ENCODE measurements at regions of chr13 and their contacts with region 1.

Region 1: GRCh38 chr13:36981156-36981743 is 17.9 kb downstream of the ALG5 start:
- DNase-seq: no peak
- ATAC-seq: no peak
- H3K4me3 ChIP-seq: no peak overlapping the region
- H3K27ac ChIP-seq: no peak overlapping the region
- H3K4me1 ChIP-seq: no peaks in the 10 kb centered on the region
- H3K27me3 ChIP-seq: no peaks in the 10 kb centered on the region
- CTCF ChIP-seq: peak in 4 of 5 experiments; percentile 30 to 45 (median 34)
- POLR2A ChIP-seq: no peak

Region 2: GRCh38 chr13:36706755-36707154 is 274.5 kb before region 1 on chr13:
- in situ Hi-C with region 1: no loop called
- intact Hi-C with region 1: no loop called
- DNase-seq: no peak
- ATAC-seq: no peak
- H3K4me3 ChIP-seq: no peak overlapping the region
- H3K27ac ChIP-seq: no peak overlapping the region
- H3K4me1 ChIP-seq: no peaks in the 10 kb centered on the region
- H3K27me3 ChIP-seq: no peaks in the 10 kb centered on the region
- CTCF ChIP-seq: no peak
- POLR2A ChIP-seq: no peak

Region 3: DNA sequence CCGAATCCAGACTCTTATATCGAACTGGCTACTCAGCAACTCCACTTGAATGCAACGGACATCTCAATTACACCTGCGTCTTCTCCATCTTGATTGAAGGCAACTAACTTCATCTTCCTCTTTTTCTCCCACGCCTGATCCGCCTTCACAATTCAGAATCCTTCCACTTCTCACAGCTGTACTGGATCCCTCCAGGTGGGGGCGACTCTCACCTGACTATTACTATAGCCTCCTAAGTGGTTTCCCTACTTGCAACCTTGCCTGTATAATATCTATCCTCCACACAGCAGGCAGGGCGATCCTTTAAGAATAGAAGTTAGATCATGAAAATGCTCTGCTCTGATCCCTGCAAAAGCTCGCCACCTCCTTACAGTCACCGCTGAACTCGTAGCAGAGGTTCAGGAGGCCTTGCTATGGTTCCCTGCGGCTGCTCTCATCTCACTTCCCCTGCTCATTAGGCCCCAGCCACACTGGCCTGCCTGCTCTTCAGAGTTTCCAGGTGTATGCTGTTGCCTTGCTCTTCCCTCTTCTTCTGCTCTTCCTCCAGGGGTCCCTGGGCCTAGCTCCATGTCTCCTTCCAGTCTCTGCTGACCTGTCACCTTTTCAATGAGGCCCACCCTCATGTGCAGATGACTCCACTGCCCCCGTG is 130.3 kb before region 1 on chr13:
- in situ Hi-C with region 1: loop called in 3 of 4 experiments (anchors 5 to 10 kb)
- intact Hi-C with region 1: loop called (anchors 2 kb)
- DNase-seq: no peak
- ATAC-seq: peak in 1 of 2 donors; percentile 39
- H3K4me3 ChIP-seq: no peak overlapping the region
- H3K27ac ChIP-seq: no peak overlapping the region
- H3K4me1 ChIP-seq: no peaks in the 10 kb centered on the region
- H3K27me3 ChIP-seq: no peaks in the 10 kb centered on the region
- CTCF ChIP-seq: peak in 1 of 5 experiments; percentile 17
- POLR2A ChIP-seq: no peak

Region 4: DNA sequence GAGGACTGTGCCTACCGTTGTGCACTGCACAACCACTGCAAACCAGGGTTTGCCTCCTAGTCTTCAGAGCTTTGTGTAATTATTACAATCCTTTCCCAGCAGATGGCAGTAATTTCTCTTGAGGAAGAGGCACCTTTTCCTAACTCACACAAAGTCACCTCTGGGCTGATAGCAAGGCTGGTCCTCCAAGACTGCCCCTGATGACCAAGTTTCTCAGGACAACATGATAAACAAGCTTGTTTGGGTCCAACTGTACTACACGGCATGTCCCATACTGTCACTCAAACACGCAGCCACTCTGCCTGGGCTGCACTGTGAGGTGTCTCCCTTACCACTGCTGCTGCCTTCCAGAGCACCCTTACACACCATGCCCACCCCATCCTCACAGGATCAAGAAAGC is 123.0 kb before region 1 on chr13:
- in situ Hi-C with region 1: loop called in 3 of 4 experiments (anchors 5 to 10 kb)
- intact Hi-C with region 1: loop called (anchors 2 kb)
- DNase-seq: no peak
- ATAC-seq: peak; percentile 30 to 77
- H3K4me3 ChIP-seq: no peak overlapping the region
- H3K27ac ChIP-seq: no peak overlapping the region
- H3K4me1 ChIP-seq: peaks cover 0 to 3% of the 10 kb centered on the region in 2 donors
- H3K27me3 ChIP-seq: no peaks in the 10 kb centered on the region
- CTCF ChIP-seq: peak in 4 of 5 experiments; percentile 11 to 41 (median 26)
- POLR2A ChIP-seq: no peak

Region 5: DNA sequence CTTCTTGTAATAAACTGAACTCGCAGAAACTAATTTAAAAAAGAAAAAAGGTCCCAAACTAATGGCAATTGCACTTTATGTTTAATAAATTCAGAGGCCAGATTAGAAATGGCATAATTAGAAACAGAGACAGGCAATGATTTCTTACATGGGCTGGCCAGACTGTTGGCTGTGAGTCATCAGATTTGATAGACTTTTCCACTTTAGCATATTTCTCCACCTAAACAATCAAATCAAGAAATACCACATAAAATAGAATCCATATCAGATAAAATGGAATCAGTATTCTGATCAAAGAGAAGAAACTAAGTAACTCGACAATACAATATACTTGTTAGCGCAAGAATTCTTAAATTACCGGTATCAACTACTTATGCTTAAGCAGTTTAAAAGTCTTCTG is 48.4 kb after region 1 on chr13:
- in situ Hi-C with region 1: no loop called
- intact Hi-C with region 1: no loop called
- DNase-seq: no peak
- ATAC-seq: no peak
- H3K4me3 ChIP-seq: no peak overlapping the region
- H3K27ac ChIP-seq: no peak overlapping the region
- H3K4me1 ChIP-seq: no peaks in the 10 kb centered on the region
- H3K27me3 ChIP-seq: no peaks in the 10 kb centered on the region
- CTCF ChIP-seq: no peak
- POLR2A ChIP-seq: no peak

Measured in gastrocnemius medialis (tissue), 4 donors.